ENCODE measurements at regions of chr2 and their contacts with region 1.

Region 1: GRCh38 chr2:10448208-10448645 is at the start of gene ODC1:
- DNase-seq: peak; percentile 97 to 99 (median 98)
- H3K4me3 ChIP-seq: peak within 1 kb of the TSS; percentile 47 to 90
- H3K4me3 Mint-ChIP-seq: peak within 1 kb of the TSS; percentile 86 to 95 (median 90)
- H3K27ac ChIP-seq: peak within 1 kb of the TSS; percentile 86
- H3K27ac Mint-ChIP-seq: peak within 1 kb of the TSS; percentile 88 to 96 (median 93)
- H3K4me1 ChIP-seq: peaks cover 42% of the 10 kb centered on the region
- H3K4me1 Mint-ChIP-seq: peaks cover 17 to 57% (median 41%) of the 10 kb centered on the region in 4 donors
- H3K27me3 ChIP-seq: no peaks in the 10 kb centered on the region
- H3K27me3 Mint-ChIP-seq: no peaks in the 10 kb centered on the region
- total RNA-seq, gene ODC1: 32.5 to 35.4 TPM

Region 2: DNA sequence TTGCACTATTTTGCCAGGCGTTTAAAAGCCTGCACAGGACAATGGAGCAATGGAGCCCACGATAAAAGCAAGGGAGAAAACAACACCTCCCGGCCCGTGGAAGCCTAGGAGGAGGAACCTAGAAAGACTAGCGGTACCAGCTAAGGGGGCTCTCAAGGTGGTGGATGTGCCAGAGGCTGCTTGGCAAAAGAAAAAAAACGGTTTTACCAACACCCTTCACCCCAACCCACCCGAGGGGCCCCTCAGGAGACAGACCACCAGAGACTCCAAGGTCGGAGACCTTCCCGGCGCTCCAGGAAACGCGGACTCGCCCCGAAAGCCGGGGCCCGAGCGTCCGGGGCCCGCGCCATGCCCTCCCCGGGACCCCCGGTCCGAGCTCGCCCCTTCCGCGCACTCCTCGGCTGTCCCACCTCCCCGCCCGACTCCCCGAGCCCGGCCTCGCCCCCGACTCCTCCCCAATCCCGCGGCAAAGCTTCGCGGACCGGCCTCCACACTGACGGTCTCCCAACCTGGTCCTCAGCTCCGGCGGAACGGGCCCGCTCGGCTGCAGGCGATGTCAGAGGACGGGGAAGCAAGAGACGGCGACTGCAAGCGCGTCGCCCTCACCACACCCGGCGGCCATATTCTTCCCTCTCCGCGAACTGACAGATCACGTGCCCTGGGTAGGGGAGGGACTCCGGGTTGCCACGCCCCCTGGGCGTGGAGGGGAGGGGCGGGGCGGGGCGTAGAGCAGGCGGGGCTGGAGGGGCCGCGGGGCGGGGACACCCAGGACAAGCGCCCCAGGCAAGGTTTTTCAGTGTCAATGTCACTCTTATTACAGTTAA is 1611.0 kb before region 1 on chr2 and contains the start of gene KIDINS220:
- CTCF ChIA-PET with region 1: no interaction called
- POLR2A ChIA-PET with region 1: no interaction called
- intact Hi-C with region 1: loop called (anchors 5 kb)
- DNase-seq: peak; percentile 82 to 87 (median 84)
- H3K4me3 ChIP-seq: peak within 1 kb of the TSS; percentile 77 to 85
- H3K4me3 Mint-ChIP-seq: peak within 1 kb of the TSS; percentile 99 to 100 (median 100)
- H3K27ac ChIP-seq: peak within 1 kb of the TSS; percentile 61
- H3K27ac Mint-ChIP-seq: peak within 1 kb of the TSS; percentile 87 to 99 (median 99)
- H3K4me1 ChIP-seq: peaks cover 44% of the 10 kb centered on the region
- H3K4me1 Mint-ChIP-seq: peaks cover 33 to 62% (median 46%) of the 10 kb centered on the region in 4 donors
- H3K27me3 ChIP-seq: no peaks in the 10 kb centered on the region
- H3K27me3 Mint-ChIP-seq: no peaks in the 10 kb centered on the region
- total RNA-seq, gene KIDINS220: 52.0 to 52.3 TPM

Region 3: DNA sequence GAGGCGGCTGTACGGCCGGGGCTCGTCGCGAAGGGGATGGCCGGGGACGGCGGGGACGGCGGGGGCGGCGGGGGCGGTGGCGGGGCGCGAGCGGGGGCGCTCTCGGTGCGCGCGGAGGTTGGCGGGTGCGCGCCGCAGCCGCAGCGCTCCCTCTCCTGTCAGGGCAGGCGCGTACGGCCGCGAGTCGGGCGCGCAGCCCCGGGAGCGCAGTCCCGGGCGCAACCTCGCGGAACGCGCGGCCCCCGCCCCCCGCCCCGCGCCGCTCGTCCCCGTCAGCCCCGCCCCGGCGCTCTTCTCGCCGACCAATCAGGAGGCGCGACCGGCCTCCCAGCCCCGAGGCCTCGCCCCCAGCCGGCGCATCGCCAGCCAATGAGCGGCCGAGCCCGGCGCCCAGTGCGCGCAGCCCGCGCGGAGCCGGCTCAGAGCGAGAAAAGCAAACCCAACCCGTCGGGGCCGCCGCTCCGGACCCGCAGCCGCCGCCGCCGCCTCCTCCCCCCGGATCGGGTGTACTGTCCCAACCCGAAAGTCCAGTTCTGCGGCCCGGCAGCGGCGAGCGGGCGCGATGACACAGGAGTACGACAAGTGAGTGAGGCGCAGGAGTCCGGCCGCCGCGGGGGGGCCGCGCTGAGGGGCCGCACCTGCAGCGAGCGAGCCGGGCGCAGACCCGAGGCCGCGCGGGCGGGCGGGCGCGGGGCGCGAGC is 496.8 kb before region 1 on chr2 and contains the start of gene GRHL1:
- CTCF ChIA-PET with region 1: no interaction called
- POLR2A ChIA-PET with region 1: no interaction called
- intact Hi-C with region 1: loop called (anchors 2 kb)
- DNase-seq: peak; percentile 85 to 92 (median 91)
- H3K4me3 ChIP-seq: peak within 1 kb of the TSS in 1 of 2 donors; percentile 58
- H3K4me3 Mint-ChIP-seq: peak within 1 kb of the TSS; percentile 80 to 91 (median 88)
- H3K27ac ChIP-seq: peak within 1 kb of the TSS; percentile 51
- H3K27ac Mint-ChIP-seq: peak within 1 kb of the TSS; percentile 15 to 73 (median 61)
- H3K4me1 ChIP-seq: peaks cover 13% of the 10 kb centered on the region
- H3K4me1 Mint-ChIP-seq: peaks cover 0 to 5% (median 4%) of the 10 kb centered on the region in 4 donors
- H3K27me3 ChIP-seq: no peaks in the 10 kb centered on the region
- H3K27me3 Mint-ChIP-seq: peaks cover 7 to 16% of the 10 kb centered on the region in 2 donors
- total RNA-seq, gene GRHL1: 0.33 to 0.49 TPM

Region 4: DNA sequence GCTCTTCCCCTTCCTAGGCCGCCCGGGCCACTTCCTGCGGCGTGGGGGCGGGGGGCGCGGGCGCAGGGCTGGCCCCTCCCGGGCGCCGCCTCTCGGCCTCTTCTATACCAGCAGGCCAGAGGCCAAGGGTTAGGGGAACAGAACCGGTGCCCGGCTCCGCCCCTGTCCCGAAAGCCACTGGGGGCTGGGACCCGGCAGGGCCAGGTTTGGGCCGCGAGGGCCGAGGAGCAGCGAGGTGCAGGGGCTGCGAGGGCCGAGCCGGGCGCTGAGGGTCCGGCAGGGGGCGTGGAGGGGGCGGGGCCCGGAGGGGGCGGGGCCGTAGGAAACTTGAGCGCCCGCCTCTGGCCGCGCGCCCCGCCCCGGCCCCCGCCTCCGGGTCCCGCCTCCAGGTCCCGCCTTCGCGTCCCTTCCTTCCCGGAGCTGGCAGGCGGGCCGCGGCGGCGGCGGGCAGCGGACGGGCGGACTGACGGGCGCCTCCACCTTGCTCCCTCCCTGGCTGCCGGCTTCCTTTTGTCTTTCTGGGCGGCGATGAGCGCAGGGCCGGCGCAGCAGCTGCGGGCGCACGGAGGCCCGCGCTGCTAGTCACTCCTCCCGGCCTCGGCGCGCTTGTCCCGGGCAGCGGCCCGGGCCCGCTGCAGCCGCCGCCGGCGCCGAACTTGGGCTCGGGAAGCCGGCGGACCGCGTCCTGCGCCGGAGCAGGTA is 145.6 kb before region 1 on chr2 and contains the start of gene HPCAL1:
- CTCF ChIA-PET with region 1: interaction called, 3 read pairs
- POLR2A ChIA-PET with region 1: interaction called, 49 read pairs
- intact Hi-C with region 1: loop called (anchors 1 kb)
- DNase-seq: peak; percentile 79 to 88 (median 85)
- H3K4me3 ChIP-seq: peak within 1 kb of the TSS; percentile 75 to 77
- H3K4me3 Mint-ChIP-seq: peak within 1 kb of the TSS; percentile 97 to 100 (median 98)
- H3K27ac ChIP-seq: peak within 1 kb of the TSS; percentile 65
- H3K27ac Mint-ChIP-seq: peak within 1 kb of the TSS; percentile 87 to 96 (median 94)
- H3K4me1 ChIP-seq: peaks cover 66% of the 10 kb centered on the region
- H3K4me1 Mint-ChIP-seq: peaks cover 56 to 86% (median 72%) of the 10 kb centered on the region in 4 donors
- H3K27me3 ChIP-seq: no peaks in the 10 kb centered on the region
- H3K27me3 Mint-ChIP-seq: no peaks in the 10 kb centered on the region
- total RNA-seq, gene HPCAL1: 77.1 to 80.7 TPM

Region 5: GRCh38 chr2:10350761-10351160 is 97.5 kb before region 1 on chr2:
- CTCF ChIA-PET with region 1: no interaction called
- POLR2A ChIA-PET with region 1: no interaction called
- intact Hi-C with region 1: no loop called
- DNase-seq: no peak
- H3K4me3 ChIP-seq: no peak overlapping the region
- H3K4me3 Mint-ChIP-seq: no peak overlapping the region
- H3K27ac ChIP-seq: no peak overlapping the region
- H3K27ac Mint-ChIP-seq: peak overlapping the region in 6 of 7 donors; percentile 1 to 79 (median 24)
- H3K4me1 ChIP-seq: peaks cover 18% of the 10 kb centered on the region
- H3K4me1 Mint-ChIP-seq: peaks cover 40 to 75% (median 62%) of the 10 kb centered on the region in 4 donors
- H3K27me3 ChIP-seq: no peaks in the 10 kb centered on the region
- H3K27me3 Mint-ChIP-seq: no peaks in the 10 kb centered on the region

Region 6: DNA sequence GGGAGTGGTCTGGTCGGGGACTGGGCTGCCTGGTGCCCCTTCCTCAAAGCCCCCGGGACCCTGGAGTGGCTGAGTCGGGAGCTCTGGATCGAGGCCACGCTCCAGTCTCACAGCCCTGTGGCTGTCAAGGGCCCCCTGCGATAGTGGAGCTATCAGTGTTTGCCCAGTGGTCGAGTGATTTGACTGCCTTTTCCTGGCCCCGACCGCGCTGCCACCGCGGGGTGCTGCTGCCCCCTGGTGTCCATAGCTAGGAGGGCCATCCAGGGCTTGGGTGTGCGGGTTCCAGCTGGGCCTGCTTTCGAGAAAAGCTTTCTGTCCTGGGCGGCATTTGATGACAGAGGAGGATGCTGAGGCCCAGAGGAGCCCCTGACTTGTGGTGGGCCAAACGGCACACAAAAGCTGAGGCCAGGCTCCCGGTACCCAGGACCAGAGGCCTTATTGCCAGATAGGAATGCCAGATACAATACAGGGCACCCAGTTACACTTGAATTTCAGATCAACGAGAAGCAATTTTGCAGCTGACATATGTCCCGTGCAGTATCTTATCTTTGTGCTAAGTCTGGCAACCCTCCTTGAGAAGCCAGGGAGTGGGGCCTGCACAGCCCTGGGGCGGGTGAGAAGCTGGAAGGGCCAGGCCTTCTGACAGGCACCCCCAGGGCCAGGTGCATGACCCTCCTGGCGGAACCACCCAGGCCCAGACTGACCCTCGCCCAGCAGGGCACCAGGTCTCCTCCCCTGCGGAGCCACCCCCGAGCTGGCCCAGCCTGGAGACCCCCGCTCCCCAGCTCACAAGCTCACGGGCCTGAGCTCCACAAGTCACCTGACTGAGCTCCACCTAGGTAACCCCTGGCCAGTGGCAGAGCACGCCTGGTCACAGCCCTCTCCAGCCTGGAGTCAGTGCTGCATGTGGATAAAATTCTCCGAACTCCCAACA is 13.1 kb before region 1 on chr2:
- CTCF ChIA-PET with region 1: interaction called, 53 read pairs
- POLR2A ChIA-PET with region 1: interaction called, 29 read pairs
- intact Hi-C with region 1: no loop called
- DNase-seq: peak in 4 of 5 donors; percentile 48 to 77 (median 66)
- H3K4me3 ChIP-seq: no peak overlapping the region
- H3K4me3 Mint-ChIP-seq: peak overlapping the region in 2 of 8 donors; percentile 15 to 24
- H3K27ac ChIP-seq: no peak overlapping the region
- H3K27ac Mint-ChIP-seq: peak overlapping the region in 2 of 7 donors; percentile 38 to 75
- H3K4me1 ChIP-seq: peaks cover 15% of the 10 kb centered on the region
- H3K4me1 Mint-ChIP-seq: peaks cover 4 to 13% (median 8%) of the 10 kb centered on the region in 4 donors
- H3K27me3 ChIP-seq: no peaks in the 10 kb centered on the region
- H3K27me3 Mint-ChIP-seq: peaks cover 0 to 5% of the 10 kb centered on the region in 2 donors

Region 7: GRCh38 chr2:10514743-10515142 is 66.5 kb after region 1 on chr2:
- CTCF ChIA-PET with region 1: no interaction called
- POLR2A ChIA-PET with region 1: no interaction called
- intact Hi-C with region 1: no loop called
- DNase-seq: no peak
- H3K4me3 ChIP-seq: no peak overlapping the region
- H3K4me3 Mint-ChIP-seq: no peak overlapping the region
- H3K27ac ChIP-seq: no peak overlapping the region
- H3K27ac Mint-ChIP-seq: no peak overlapping the region
- H3K4me1 ChIP-seq: no peaks in the 10 kb centered on the region
- H3K4me1 Mint-ChIP-seq: no peaks in the 10 kb centered on the region
- H3K27me3 ChIP-seq: no peaks in the 10 kb centered on the region
- H3K27me3 Mint-ChIP-seq: no peaks in the 10 kb centered on the region

Region 8: GRCh38 chr2:10538224-10538894 is 90.1 kb after region 1 on chr2:
- CTCF ChIA-PET with region 1: no interaction called
- POLR2A ChIA-PET with region 1: no interaction called
- intact Hi-C with region 1: no loop called
- DNase-seq: no peak
- H3K4me3 ChIP-seq: no peak overlapping the region
- H3K4me3 Mint-ChIP-seq: peak overlapping the region in 1 of 8 donors; percentile 49
- H3K27ac ChIP-seq: no peak overlapping the region
- H3K27ac Mint-ChIP-seq: no peak overlapping the region
- H3K4me1 ChIP-seq: no peaks in the 10 kb centered on the region
- H3K4me1 Mint-ChIP-seq: peaks cover 2 to 12% (median 5%) of the 10 kb centered on the region in 4 donors
- H3K27me3 ChIP-seq: no peaks in the 10 kb centered on the region
- H3K27me3 Mint-ChIP-seq: peaks cover 3 to 13% of the 10 kb centered on the region in 2 donors

Region 9: DNA sequence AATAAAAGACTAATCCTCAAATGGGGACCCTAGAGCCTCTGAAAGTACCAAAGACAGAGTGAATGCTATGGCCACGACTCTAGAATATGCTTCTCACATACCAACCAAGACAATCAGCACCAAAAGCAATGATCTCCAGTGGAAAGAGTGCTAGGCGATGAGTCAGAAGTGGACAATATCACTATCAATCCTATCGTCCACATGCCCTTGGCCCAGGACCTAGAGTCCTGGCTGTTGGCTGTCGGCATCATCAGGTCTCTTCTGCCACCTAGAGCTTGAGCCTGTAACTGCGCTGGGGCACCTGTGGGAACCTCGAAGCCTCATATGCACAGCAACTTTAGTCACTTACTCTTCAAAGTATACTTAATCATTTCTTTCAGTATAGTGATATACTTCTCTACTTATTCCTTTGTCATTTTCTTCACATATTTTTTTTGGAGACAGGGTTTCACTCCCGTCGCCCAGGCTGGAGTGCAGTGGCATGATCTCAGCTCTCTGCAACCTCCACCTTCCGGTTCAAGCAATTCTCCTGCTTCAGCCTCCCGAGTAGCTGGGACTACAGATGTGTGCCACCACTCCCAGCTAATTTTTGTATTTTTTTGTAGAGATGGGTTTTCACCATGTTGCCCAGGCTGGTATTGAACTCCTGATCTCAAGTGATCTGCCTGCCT is 211.8 kb after region 1 on chr2:
- CTCF ChIA-PET with region 1: interaction called, 3 read pairs
- POLR2A ChIA-PET with region 1: interaction called, 4 read pairs
- intact Hi-C with region 1: loop called (anchors 1 kb)
- DNase-seq: peak in 3 of 5 donors; percentile 13 to 19 (median 19)
- H3K4me3 ChIP-seq: no peak overlapping the region
- H3K4me3 Mint-ChIP-seq: no peak overlapping the region
- H3K27ac ChIP-seq: no peak overlapping the region
- H3K27ac Mint-ChIP-seq: no peak overlapping the region
- H3K4me1 ChIP-seq: peaks cover 9% of the 10 kb centered on the region
- H3K4me1 Mint-ChIP-seq: peaks cover 5 to 10% (median 9%) of the 10 kb centered on the region in 4 donors
- H3K27me3 ChIP-seq: no peaks in the 10 kb centered on the region
- H3K27me3 Mint-ChIP-seq: no peaks in the 10 kb centered on the region

Region 10: DNA sequence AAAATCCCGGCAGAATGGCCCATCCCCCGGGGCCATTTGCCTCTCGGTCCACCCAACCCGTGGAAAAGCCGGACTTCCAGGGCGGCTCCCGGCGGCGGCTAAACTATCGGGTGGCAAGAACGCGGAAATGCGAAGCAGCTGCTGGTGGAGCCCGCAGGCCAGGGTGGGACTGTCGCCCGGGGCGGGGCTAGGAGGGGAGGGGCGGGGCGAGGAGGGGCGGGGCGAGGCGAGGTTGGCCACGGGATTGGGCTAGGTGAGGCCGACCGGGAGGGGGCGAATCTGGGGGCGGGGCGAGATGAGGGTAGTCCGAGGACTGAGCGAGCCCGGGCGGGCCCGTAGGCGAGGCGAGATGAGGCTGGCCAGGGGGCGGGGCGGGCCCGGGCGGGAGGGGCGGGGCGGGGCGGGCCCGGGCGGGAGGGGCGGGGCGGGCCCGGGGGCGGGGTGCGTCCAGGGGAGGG is 706.7 kb after region 1 on chr2:
- CTCF ChIA-PET with region 1: no interaction called
- POLR2A ChIA-PET with region 1: no interaction called
- intact Hi-C with region 1: loop called (anchors 10 kb)
- DNase-seq: peak; percentile 95 to 98 (median 97)
- H3K4me3 ChIP-seq: peak overlapping the region; percentile 38 to 66
- H3K4me3 Mint-ChIP-seq: peak overlapping the region; percentile 81 to 88 (median 85)
- H3K27ac ChIP-seq: peak overlapping the region; percentile 68
- H3K27ac Mint-ChIP-seq: peak overlapping the region; percentile 85 to 93 (median 88)
- H3K4me1 ChIP-seq: peaks cover 23% of the 10 kb centered on the region
- H3K4me1 Mint-ChIP-seq: peaks cover 4 to 28% (median 21%) of the 10 kb centered on the region in 4 donors
- H3K27me3 ChIP-seq: no peaks in the 10 kb centered on the region
- H3K27me3 Mint-ChIP-seq: no peaks in the 10 kb centered on the region

Measured in CD4-positive, alpha-beta memory T cell (primary cell).